Calu3 (cell line): ENCODE measurements at regions of chr12 and their contacts with region 1.

Region 1: DNA sequence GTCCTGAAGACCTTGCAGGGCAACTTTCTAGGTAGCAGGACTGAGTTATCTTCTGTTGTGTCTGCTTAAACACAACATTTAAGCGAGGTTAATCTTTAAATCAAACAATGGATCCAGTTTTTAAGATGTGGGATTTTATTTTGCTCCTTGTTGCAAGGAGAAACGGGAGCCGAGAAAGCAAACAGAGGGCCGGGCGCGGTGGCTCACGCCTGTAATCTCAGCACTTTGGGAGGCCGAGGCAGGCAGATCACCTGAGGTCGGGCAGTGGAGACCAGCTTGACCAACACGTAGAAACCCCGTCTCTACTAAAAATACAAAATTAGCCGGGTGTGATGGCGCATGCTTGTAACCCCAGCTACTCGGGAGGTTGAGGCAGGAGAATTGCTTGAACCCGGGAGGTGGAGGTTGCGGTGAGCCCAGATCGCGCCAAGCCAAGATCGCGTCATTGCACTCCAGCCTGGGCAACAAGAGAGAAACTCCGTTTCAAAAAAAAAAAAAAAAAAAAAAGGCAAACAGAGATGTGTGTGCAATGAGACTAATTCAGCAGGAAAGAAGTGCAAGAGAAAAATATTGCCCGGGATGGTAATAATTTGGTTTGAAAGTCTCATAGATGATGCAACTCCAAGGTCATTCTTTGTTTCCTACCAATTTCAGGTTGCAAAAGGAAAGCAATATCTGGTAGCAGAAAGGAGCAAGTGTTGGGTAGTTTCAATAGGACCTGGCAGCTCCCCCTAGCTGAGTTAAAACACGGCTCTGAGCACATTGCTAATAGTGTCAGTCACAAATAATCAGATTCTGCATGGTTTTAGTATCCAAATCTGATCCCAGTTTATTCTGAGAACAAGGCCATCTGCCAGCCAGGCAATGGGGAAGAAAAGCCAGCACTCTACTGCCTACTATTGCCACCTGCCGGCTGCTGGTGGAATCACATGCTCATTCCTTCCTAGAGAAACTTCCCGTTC is 141.4 kb downstream of the PPM1H start:
- DNase-seq: peak; percentile 88
- H3K4me3 Mint-ChIP-seq: no peak overlapping the region
- H3K27ac Mint-ChIP-seq: peak overlapping the region; percentile 82
- H3K4me1 Mint-ChIP-seq: peaks cover 35% of the 10 kb centered on the region
- H3K27me3 Mint-ChIP-seq: no peaks in the 10 kb centered on the region
- CTCF ChIP-seq: peak; percentile 90

Region 2: DNA sequence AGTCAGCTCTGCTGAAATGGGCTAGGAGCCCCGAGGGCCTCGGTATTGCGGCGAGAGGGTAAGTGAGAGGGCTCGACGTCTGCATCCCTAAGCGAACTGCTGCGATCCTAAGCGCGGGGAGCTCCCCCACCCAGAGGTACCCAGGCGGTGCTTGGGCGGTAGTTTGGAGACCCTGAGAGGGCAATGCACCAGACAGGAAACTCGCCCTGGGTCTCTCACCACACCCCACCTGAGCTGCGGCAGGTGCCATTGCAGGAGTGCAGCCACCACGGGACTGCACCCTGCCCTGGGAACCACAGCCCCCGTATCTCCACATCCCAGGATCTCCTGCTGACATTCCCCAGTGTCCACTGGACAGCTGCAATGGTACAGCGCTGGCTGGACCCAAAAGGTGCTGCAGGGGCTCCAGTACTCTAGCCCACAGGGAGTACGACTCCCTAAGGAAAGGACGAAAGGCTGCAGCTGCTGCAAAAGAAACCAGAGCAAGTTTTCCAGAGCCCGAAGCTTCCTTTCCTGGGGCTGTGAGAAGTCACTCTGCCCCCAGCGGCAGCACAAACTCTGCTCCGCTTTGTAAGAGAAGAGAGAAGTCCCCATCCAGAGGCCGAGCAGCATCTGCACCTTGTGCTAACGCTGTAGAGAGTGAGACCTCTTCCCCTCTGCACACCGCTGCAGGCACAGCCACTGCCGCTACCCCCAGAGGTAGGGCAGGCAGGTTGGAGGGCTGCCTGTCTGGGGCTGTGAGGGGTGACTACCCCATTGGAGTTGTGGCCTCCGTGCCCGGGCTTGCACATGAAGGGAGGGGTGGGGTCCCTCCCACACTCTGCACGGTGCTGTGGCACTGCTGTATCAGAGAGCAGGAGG is 358.0 kb before region 1 on chr12:
- CTCF ChIA-PET with region 1: interaction called, 3 read pairs
- intact Hi-C with region 1: loop called (anchors 1 kb)
- DNase-seq: peak; percentile 70
- H3K4me3 Mint-ChIP-seq: peak overlapping the region; percentile 85
- H3K27ac Mint-ChIP-seq: no peak overlapping the region
- H3K4me1 Mint-ChIP-seq: peaks cover 6% of the 10 kb centered on the region
- H3K27me3 Mint-ChIP-seq: peaks cover 26% of the 10 kb centered on the region
- CTCF ChIP-seq: no peak

Region 3: DNA sequence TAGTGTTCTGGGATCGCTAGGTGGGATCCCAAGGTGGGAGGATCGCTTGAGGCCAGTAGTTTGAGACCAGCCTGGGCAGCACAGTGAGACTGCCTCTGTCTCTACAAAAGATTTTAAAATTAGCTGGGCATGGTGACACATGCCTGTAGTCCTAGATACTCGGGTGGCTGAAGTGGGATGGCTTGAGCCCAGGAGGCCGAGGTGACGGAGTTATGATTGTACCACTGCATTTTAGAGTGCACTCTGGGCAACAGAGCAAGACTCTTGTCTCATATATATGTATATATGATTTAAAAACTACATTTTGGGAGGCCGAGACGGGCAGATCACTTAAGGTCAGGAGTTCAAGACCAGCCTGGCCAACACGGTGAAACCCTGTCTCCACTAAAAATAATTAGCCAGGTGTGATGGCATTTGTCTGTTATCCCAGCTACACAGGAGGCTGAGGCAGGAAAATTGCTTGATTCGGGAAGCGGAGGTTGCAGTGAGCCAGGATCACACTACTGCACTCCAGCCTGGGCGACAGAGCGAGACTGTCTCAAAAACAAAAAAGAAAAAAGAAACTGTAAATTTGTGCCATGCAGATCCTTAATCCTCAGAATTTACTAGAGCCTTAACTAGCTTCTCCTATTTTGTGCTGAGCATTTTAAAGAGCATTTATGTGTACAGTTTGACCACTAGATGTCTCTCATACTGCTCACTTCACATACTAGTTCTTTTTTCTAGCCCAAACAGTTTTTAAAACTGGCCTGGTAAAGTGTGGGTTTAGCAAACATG is 212.1 kb before region 1 on chr12:
- CTCF ChIA-PET with region 1: interaction called, 41 read pairs
- intact Hi-C with region 1: loop called (anchors 1 kb)
- DNase-seq: no peak
- H3K4me3 Mint-ChIP-seq: no peak overlapping the region
- H3K27ac Mint-ChIP-seq: no peak overlapping the region
- H3K4me1 Mint-ChIP-seq: no peaks in the 10 kb centered on the region
- H3K27me3 Mint-ChIP-seq: no peaks in the 10 kb centered on the region
- CTCF ChIP-seq: peak; percentile 27

Region 4: GRCh38 chr12:62660756-62661155 is 132.8 kb before region 1 on chr12:
- CTCF ChIA-PET with region 1: interaction called, 10 read pairs
- intact Hi-C with region 1: no loop called
- DNase-seq: peak; percentile 73
- H3K4me3 Mint-ChIP-seq: no peak overlapping the region
- H3K27ac Mint-ChIP-seq: peak overlapping the region; percentile 98
- H3K4me1 Mint-ChIP-seq: peaks cover 40% of the 10 kb centered on the region
- H3K27me3 Mint-ChIP-seq: no peaks in the 10 kb centered on the region
- CTCF ChIP-seq: no peak

Region 5: GRCh38 chr12:62732861-62733427 is 60.6 kb before region 1 on chr12:
- CTCF ChIA-PET with region 1: interaction called, 4 read pairs
- intact Hi-C with region 1: loop called (anchors 1 kb)
- DNase-seq: peak; percentile 74
- H3K4me3 Mint-ChIP-seq: no peak overlapping the region
- H3K27ac Mint-ChIP-seq: peak overlapping the region; percentile 97
- H3K4me1 Mint-ChIP-seq: peaks cover 60% of the 10 kb centered on the region
- H3K27me3 Mint-ChIP-seq: no peaks in the 10 kb centered on the region
- CTCF ChIP-seq: no peak

Region 6: DNA sequence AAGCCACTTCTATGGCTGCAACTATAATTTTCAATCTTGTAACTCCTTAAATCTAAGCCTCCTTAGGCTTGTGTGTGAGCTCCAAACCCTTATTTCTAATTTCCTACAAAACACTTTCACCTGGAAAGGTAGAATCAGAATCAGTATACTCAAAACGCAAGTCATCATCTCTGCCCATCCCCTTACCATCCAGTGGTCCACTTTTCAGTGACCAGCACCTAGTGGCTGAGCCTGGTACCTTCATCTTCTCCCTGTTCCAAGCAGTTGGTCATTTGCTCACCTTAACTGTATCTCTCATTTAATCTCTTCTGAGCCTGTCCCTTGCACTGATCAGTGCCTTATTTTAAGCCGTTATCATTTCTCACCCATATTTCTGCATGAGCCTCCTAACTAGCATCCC is 33.5 kb after region 1 on chr12:
- CTCF ChIA-PET with region 1: no interaction called
- intact Hi-C with region 1: no loop called
- DNase-seq: no peak
- H3K4me3 Mint-ChIP-seq: no peak overlapping the region
- H3K27ac Mint-ChIP-seq: no peak overlapping the region
- H3K4me1 Mint-ChIP-seq: no peaks in the 10 kb centered on the region
- H3K27me3 Mint-ChIP-seq: no peaks in the 10 kb centered on the region
- CTCF ChIP-seq: no peak

Region 7: GRCh38 chr12:62859321-62859737 is 65.8 kb after region 1 on chr12:
- CTCF ChIA-PET with region 1: no interaction called
- intact Hi-C with region 1: no loop called
- DNase-seq: no peak
- H3K4me3 Mint-ChIP-seq: no peak overlapping the region
- H3K27ac Mint-ChIP-seq: no peak overlapping the region
- H3K4me1 Mint-ChIP-seq: peaks cover 46% of the 10 kb centered on the region
- H3K27me3 Mint-ChIP-seq: no peaks in the 10 kb centered on the region
- CTCF ChIP-seq: no peak

Region 8: DNA sequence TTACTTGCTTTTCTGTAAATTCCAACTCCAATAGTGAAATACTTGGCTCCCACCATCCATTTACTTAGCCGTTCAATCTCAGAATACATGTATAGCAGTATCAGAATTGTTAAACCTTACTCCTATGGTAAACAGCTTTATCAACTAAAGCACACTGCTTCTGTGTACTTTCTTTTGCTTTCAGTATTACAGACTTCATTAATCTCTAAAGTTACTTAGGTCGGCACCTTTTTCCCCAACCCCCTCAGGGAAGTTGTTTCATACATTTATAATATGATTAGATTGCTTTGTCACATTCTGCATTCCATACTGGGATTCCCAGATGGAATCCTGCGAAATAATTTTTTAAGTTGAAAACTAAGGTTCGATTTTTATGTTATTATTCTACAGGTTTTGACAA is 345.0 kb after region 1 on chr12:
- CTCF ChIA-PET with region 1: no interaction called
- intact Hi-C with region 1: no loop called
- DNase-seq: no peak
- H3K4me3 Mint-ChIP-seq: no peak overlapping the region
- H3K27ac Mint-ChIP-seq: no peak overlapping the region
- H3K4me1 Mint-ChIP-seq: no peaks in the 10 kb centered on the region
- H3K27me3 Mint-ChIP-seq: peaks cover 17% of the 10 kb centered on the region
- CTCF ChIP-seq: no peak